Activated T-helper 2 cell treated with anti-CD3 and anti-CD28 coated beads, Interferon-gamma antibody, Interleukin-2, Interleukin-4, amounts not matched to agents 10 μg/mL and 5 μg/mL and 100 μg/mL, durations not matched to agents 14 hours and 24 hours and 36 hours (primary cell): ENCODE measurements at regions of chr16 and their contacts with region 1.

Region 1: DNA sequence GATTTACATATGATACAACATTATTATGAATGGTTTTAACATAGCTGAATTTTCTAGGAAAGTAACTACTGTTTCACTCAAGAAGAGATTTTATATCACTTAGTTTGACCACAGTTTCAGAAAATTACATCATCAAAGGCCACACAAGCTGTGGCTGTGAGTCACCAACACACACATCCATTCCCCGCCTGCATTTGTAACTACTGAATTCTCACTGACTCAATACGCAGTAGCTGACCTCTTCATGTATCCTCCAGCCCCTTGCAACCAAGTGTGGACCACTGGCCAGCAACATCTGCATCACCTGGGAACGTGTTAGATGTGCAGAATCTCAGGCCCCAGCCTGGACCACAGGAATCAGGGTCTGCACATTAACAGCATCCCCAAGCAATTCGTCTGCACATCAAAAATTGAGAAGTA is 197.6 kb downstream of the XYLT1 start:
- DNase-seq: peak; percentile 31
- H3K4me3 Mint-ChIP-seq: no peak overlapping the region
- H3K27ac Mint-ChIP-seq: no peak overlapping the region
- H3K4me1 Mint-ChIP-seq: peaks cover 58% of the 10 kb centered on the region
- H3K27me3 Mint-ChIP-seq: peaks cover 7% of the 10 kb centered on the region

Region 2: GRCh38 chr16:17224879-17225281 is 48.3 kb before region 1 on chr16:
- intact Hi-C with region 1: no loop called
- DNase-seq: no peak
- H3K4me3 Mint-ChIP-seq: no peak overlapping the region
- H3K27ac Mint-ChIP-seq: peak overlapping the region; percentile 23
- H3K4me1 Mint-ChIP-seq: peaks cover 10% of the 10 kb centered on the region
- H3K27me3 Mint-ChIP-seq: no peaks in the 10 kb centered on the region

Region 3: DNA sequence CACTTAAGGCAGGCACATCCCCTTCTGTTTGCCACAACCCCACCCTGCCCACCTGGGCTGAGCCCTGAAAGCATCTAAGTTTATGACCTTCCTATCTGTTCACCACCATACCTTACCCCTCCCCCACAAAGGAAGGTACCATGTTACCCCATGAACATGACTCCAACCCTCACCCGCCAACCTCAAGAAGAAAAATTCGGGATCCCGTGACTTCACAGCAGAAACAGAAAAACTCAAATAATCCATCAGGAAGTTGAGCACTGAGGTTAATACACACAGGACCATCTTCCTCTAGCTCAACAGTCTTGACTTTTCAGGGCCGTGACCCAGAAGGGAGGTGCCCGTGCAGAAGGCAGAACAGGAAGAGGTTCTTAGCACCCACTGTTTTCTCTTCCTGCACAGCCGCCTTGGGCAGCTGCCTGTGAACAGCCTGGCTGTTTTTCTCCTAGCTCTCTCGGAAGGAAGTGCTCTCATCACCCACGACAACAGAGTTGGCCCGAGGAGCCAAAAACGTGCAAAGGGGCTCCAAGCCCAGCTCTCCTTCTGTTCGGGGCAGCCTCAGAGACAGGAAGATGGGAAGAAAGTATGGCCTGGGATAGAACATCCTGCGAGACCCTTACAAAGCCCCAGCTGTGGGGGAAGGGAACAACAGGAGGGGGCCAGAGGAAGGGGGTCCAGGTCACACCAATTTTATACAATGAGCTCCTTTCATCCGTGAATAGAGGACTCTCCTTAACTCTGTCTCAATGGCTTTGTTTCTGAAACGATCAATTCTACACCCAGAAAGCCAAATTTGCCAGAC is 96.5 kb after region 1 on chr16:
- intact Hi-C with region 1: loop called (anchors 5 kb)
- DNase-seq: peak; percentile 76
- H3K4me3 Mint-ChIP-seq: peak overlapping the region; percentile 83
- H3K27ac Mint-ChIP-seq: peak overlapping the region; percentile 99
- H3K4me1 Mint-ChIP-seq: peaks cover 83% of the 10 kb centered on the region
- H3K27me3 Mint-ChIP-seq: no peaks in the 10 kb centered on the region

Region 4: GRCh38 chr16:17497648-17498047 is 224.5 kb after region 1 on chr16:
- intact Hi-C with region 1: no loop called
- DNase-seq: no peak
- H3K4me3 Mint-ChIP-seq: no peak overlapping the region
- H3K27ac Mint-ChIP-seq: no peak overlapping the region
- H3K4me1 Mint-ChIP-seq: no peaks in the 10 kb centered on the region
- H3K27me3 Mint-ChIP-seq: peaks cover 5% of the 10 kb centered on the region